Tibial artery (tissue), 4 donors: ENCODE measurements at regions of chr11 and their contacts with region 1.

Region 1: DNA sequence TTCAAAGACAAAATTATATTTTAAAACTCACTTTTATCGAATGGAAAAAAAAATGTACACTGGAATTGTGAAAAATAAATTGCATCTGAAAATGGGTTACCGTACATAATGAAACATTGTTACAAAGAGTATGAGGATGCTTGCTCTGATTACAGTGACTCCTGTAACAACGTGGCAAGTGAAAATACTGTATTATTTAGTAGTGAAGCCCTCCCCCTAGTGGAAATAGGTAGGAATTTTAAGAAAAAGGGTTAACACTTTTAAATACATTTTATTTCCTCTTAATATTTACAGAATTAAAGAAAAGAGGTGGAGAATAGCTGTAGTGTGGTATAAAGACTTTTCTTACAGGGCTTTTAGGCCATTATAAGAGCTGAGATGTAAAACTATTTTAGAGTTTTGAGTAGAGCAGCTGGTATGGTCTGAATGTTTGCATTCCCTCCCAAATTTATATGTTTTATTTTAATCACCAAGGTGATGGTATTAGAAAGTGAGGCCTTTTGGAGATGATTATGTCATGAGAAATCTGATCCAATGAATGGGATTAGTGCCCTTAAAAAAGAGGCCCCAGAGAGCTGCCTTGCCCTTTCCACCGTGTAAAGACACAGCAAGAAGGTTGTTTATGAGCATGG is 25.2 kb downstream of the FAM76B start:
- DNase-seq: no peak
- H3K4me3 ChIP-seq: no peak overlapping the region
- H3K27ac ChIP-seq: no peak overlapping the region
- H3K4me1 ChIP-seq: no peaks in the 10 kb centered on the region
- H3K27me3 ChIP-seq: no peaks in the 10 kb centered on the region
- CTCF ChIP-seq: peak; percentile 64 to 88

Region 2: GRCh38 chr11:94973099-94973968 is 791.0 kb before region 1 on chr11 and contains the starts of genes CWC15 and KDM4D:
- intact Hi-C with region 1: loop called (anchors 10 kb)
- DNase-seq: peak; percentile 94 to 97
- H3K4me3 ChIP-seq: peak within 1 kb of the TSS; percentile 74 to 87
- H3K27ac ChIP-seq: peak within 1 kb of the TSS; percentile 77 to 86
- H3K4me1 ChIP-seq: peaks cover 0 to 16% (median 10%) of the 10 kb centered on the region in 4 donors
- H3K27me3 ChIP-seq: no peaks in the 10 kb centered on the region
- CTCF ChIP-seq: no peak

Region 3: GRCh38 chr11:95076416-95076815 is 688.0 kb before region 1 on chr11:
- intact Hi-C with region 1: loop called (anchors 10 kb)
- DNase-seq: peak; percentile 72 to 92
- H3K4me3 ChIP-seq: no peak overlapping the region
- H3K27ac ChIP-seq: peak overlapping the region; percentile 73 to 81
- H3K4me1 ChIP-seq: peaks cover 4 to 77% (median 51%) of the 10 kb centered on the region in 4 donors
- H3K27me3 ChIP-seq: no peaks in the 10 kb centered on the region
- CTCF ChIP-seq: no peak

Region 4: DNA sequence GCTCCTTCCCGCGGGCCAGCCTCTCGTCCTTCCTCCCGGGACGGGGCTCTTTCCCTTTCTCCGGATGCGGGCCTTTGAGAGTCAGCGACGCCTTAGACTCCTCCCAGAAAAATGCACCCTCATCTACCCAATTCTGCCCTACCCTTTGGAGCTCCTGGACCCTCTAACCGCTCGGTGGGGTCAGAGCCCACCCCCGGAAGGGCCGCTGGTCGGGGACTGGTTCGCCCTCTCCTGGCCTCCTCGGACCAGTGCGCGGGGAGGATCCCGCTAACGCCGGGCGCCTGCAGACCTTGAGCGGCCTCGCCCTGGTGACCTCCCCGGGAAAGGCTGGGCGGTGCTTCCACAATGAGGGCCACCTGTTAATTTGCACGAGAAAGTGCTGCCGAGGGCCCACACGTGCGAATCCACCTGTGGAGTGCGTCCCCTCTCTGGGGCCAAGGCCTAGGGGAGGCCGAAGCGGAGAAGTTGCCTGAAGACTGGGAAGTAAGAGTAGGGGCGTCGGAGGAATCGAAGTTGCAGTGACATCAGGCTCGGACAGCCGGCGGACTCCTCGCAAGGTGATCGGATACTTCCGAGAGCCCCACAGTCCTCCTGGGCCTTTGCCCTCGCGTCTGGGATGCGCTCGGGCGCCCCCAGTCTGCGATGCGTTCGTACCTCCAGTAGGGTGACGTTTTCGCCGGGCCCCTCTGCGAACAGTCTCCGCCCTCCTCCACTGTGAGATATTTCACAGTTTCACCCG is 613.3 kb before region 1 on chr11:
- intact Hi-C with region 1: loop called (anchors 2 kb)
- DNase-seq: peak; percentile 91 to 95
- H3K4me3 ChIP-seq: peak overlapping the region; percentile 58 to 60
- H3K27ac ChIP-seq: peak overlapping the region; percentile 80 to 92
- H3K4me1 ChIP-seq: peaks cover 0 to 57% (median 20%) of the 10 kb centered on the region in 4 donors
- H3K27me3 ChIP-seq: no peaks in the 10 kb centered on the region
- CTCF ChIP-seq: peak; percentile 83 to 98

Region 5: GRCh38 chr11:95231127-95231880 is 533.1 kb before region 1 on chr11 and contains the start of gene SESN3:
- intact Hi-C with region 1: loop called (anchors 10 kb)
- DNase-seq: peak; percentile 99
- H3K4me3 ChIP-seq: peak within 1 kb of the TSS; percentile 96 to 97
- H3K27ac ChIP-seq: peak within 1 kb of the TSS; percentile 93 to 94
- H3K4me1 ChIP-seq: peaks cover 0 to 39% (median 19%) of the 10 kb centered on the region in 4 donors
- H3K27me3 ChIP-seq: no peaks in the 10 kb centered on the region
- CTCF ChIP-seq: no peak

Region 6: GRCh38 chr11:95705485-95706124 is 58.8 kb before region 1 on chr11:
- intact Hi-C with region 1: loop called (anchors 5 kb)
- DNase-seq: peak; percentile 90 to 94
- H3K4me3 ChIP-seq: no peak overlapping the region
- H3K27ac ChIP-seq: peak overlapping the region; percentile 79 to 81
- H3K4me1 ChIP-seq: peaks cover 0 to 65% (median 33%) of the 10 kb centered on the region in 4 donors
- H3K27me3 ChIP-seq: no peaks in the 10 kb centered on the region
- CTCF ChIP-seq: peak; percentile 91 to 94

Region 7: DNA sequence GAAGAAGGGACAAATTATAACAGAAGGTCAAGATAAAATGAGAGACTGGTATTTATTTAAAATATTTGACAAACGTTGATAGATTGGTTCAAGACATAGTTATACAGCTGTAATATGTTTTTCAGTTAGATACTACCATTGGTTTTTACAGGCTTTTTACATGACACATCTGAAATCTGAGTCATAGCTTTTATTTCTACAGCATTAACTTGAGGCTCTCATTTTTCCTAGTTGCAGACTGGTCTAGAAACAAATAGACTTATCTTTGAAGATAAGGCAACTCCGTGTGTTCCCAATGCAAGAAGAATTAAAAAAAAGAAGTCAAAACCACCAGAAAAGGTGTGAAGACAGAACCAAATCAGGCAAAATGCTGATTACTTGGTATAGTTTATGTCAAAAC is 57.3 kb after region 1 on chr11:
- intact Hi-C with region 1: no loop called
- DNase-seq: no peak
- H3K4me3 ChIP-seq: no peak overlapping the region
- H3K27ac ChIP-seq: no peak overlapping the region
- H3K4me1 ChIP-seq: no peaks in the 10 kb centered on the region
- H3K27me3 ChIP-seq: no peaks in the 10 kb centered on the region
- CTCF ChIP-seq: no peak